Activated CD4-positive, alpha-beta memory T cell treated with anti-CD3 and anti-CD28 coated beads for 36 hours (primary cell): ENCODE measurements at regions of chr4 and their contacts with region 1.

Region 1: GRCh38 chr4:36320117-36320896 is 38.9 kb downstream of the DTHD1 start:
- DNase-seq: no peak
- H3K4me3 Mint-ChIP-seq: no peak overlapping the region
- H3K27ac Mint-ChIP-seq: peak overlapping the region; percentile 67
- H3K4me1 Mint-ChIP-seq: peaks cover 79% of the 10 kb centered on the region
- H3K27me3 Mint-ChIP-seq: no peaks in the 10 kb centered on the region

Region 2: DNA sequence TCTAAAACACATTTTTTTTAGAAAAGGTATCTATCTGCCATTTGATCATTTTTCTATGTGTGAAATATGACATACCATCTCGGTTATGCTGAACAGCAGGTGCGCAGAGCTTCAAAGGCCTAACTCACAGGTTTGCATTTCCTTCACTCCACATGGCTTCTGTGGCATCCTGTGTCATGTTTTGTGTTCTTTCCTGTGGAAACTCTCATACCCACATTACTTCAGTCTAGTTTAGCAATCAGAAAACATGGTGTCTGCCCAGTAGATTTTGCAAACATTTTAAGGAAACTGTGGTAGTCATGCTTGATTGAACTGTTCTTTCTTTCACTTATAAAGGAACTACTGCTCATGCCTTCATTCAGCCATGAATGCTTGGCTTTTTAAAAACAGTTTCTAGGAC is 64.7 kb before region 1 on chr4:
- CTCF ChIA-PET with region 1: interaction called, 3 read pairs
- POLR2A ChIA-PET with region 1: interaction called, 4 read pairs
- intact Hi-C with region 1: loop called (anchors 1 kb)
- DNase-seq: peak; percentile 75
- H3K4me3 Mint-ChIP-seq: peak overlapping the region; percentile 65
- H3K27ac Mint-ChIP-seq: peak overlapping the region; percentile 95
- H3K4me1 Mint-ChIP-seq: peaks cover 44% of the 10 kb centered on the region
- H3K27me3 Mint-ChIP-seq: no peaks in the 10 kb centered on the region

Region 3: GRCh38 chr4:36280555-36280954 is 39.8 kb before region 1 on chr4:
- CTCF ChIA-PET with region 1: interaction called, 7 read pairs
- POLR2A ChIA-PET with region 1: interaction called, 13 read pairs
- intact Hi-C with region 1: loop called (anchors 1 kb)
- DNase-seq: no peak
- H3K4me3 Mint-ChIP-seq: no peak overlapping the region
- H3K27ac Mint-ChIP-seq: no peak overlapping the region
- H3K4me1 Mint-ChIP-seq: peaks cover 72% of the 10 kb centered on the region
- H3K27me3 Mint-ChIP-seq: no peaks in the 10 kb centered on the region

Region 4: GRCh38 chr4:36332023-36332781 is 11.9 kb after region 1 on chr4:
- CTCF ChIA-PET with region 1: no interaction called
- POLR2A ChIA-PET with region 1: interaction called, 4 read pairs
- intact Hi-C with region 1: loop called (anchors 1 kb)
- DNase-seq: peak; percentile 57
- H3K4me3 Mint-ChIP-seq: no peak overlapping the region
- H3K27ac Mint-ChIP-seq: peak overlapping the region; percentile 78
- H3K4me1 Mint-ChIP-seq: peaks cover 23% of the 10 kb centered on the region
- H3K27me3 Mint-ChIP-seq: no peaks in the 10 kb centered on the region

Region 5: DNA sequence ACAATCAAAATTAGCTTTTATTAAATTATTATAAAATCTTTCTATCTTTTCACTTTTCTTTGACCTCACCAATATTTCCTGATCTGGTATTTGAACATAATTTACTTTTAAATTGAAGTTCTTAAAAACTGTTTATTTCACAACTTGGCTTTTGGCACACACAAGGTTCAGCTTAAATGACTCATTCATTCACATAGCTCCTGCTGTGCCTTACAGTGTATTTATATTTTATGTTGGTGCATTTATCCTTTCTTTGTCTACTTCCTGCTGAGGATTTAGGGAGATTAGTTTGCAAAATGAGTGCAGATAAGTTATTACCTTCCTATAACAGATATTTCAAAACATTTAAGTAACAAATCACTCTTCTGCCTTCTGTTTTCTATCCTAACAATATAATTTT is 391.7 kb after region 1 on chr4:
- CTCF ChIA-PET with region 1: no interaction called
- POLR2A ChIA-PET with region 1: no interaction called
- intact Hi-C with region 1: no loop called
- DNase-seq: no peak
- H3K4me3 Mint-ChIP-seq: no peak overlapping the region
- H3K27ac Mint-ChIP-seq: no peak overlapping the region
- H3K4me1 Mint-ChIP-seq: no peaks in the 10 kb centered on the region
- H3K27me3 Mint-ChIP-seq: no peaks in the 10 kb centered on the region

Region 6: GRCh38 chr4:36961420-36961819 is 641.1 kb after region 1 on chr4:
- CTCF ChIA-PET with region 1: no interaction called
- POLR2A ChIA-PET with region 1: no interaction called
- intact Hi-C with region 1: no loop called
- DNase-seq: no peak
- H3K4me3 Mint-ChIP-seq: no peak overlapping the region
- H3K27ac Mint-ChIP-seq: no peak overlapping the region
- H3K4me1 Mint-ChIP-seq: no peaks in the 10 kb centered on the region
- H3K27me3 Mint-ChIP-seq: no peaks in the 10 kb centered on the region